Dendritic cell treated with granulocyte-macrophage colony-stimulating factor and Interleukin-4, amounts not matched to agents 40 ng/mL and 50 ng/mL, for 4 days (primary cell): ENCODE measurements at regions of chr2 and their contacts with region 1.

Region 1: DNA sequence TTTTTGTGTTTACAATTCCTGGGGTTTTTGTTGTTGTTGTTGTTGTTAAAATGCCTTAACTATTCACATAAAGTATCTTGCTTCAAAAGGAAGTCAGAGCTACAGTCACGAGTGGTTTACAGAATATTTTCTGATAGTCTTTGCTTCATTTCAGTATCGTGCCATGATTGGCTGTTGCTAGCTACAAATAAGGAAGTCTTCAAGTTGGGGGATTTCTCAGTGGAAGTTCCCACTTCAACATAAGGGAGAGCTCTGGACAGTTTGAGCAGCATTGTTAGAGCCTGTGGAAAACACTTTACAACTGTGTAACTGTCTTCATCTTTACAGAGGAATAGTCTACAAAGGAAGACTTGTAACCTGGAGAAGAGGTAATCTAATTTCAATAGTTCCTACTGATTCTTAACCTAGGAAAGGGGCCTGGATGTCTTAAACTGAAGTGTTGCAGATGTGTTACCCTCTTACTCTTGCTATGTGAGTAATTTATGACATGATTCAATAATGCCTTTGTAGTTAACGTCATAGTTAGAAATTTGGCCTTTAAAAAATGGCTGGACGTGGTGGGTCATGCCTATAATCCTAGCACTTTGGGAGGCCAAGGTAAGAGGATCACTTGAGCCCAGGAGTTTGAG is 23.4 kb upstream of the TANK start:
- H3K4me3 Mint-ChIP-seq: peak overlapping the region; percentile 77
- H3K27ac Mint-ChIP-seq: peak overlapping the region; percentile 91
- H3K4me1 Mint-ChIP-seq: peaks cover 22% of the 10 kb centered on the region
- H3K27me3 Mint-ChIP-seq: no peaks in the 10 kb centered on the region

Region 2: GRCh38 chr2:160984426-160985077 is 152.3 kb before region 1 on chr2:
- intact Hi-C with region 1: no loop called
- H3K4me3 Mint-ChIP-seq: no peak overlapping the region
- H3K27ac Mint-ChIP-seq: no peak overlapping the region
- H3K4me1 Mint-ChIP-seq: peaks cover 5% of the 10 kb centered on the region
- H3K27me3 Mint-ChIP-seq: no peaks in the 10 kb centered on the region

Region 3: DNA sequence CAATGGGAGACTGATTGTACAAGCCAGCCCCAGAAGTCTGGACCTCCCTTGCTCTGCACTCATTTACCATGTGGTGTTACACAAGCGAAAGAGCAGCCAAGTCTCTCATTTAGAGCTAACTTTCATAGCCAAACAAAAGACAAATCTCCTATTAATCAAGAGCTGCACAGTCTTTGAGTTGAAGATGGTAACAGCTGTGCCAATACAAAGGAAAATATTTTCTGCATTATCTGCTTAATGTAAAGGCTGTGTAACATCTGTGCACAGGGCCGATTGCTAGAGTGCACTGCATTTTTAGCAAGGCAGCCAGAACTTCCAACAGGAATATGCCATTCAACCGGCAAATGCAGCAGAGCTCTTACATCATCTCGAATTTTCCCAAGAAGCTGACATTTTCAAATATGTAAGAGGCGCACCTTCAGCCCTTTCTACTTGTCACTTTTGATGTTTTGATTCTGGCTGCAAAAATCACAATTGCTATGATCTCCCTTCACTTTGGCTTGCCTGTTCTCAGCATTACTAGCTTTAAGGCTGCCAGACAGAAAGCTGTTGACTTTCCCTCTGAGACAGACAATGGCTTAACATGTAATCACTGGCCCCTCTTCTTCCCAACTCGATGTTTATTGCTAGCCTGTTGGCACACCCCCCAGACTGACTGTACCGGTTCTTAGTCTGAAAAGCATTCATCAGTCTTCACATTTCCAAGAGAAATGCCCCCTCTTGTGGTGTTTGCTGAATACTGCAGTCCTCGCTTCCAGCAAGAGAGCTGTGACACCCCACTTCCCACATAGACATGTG is 73.5 kb before region 1 on chr2:
- intact Hi-C with region 1: loop called (anchors 5 kb)
- H3K4me3 Mint-ChIP-seq: no peak overlapping the region
- H3K27ac Mint-ChIP-seq: peak overlapping the region; percentile 10
- H3K4me1 Mint-ChIP-seq: peaks cover 6% of the 10 kb centered on the region
- H3K27me3 Mint-ChIP-seq: peaks cover 2% of the 10 kb centered on the region

Region 4: GRCh38 chr2:161077367-161078210 is 59.2 kb before region 1 on chr2:
- intact Hi-C with region 1: loop called (anchors 1 kb)
- H3K4me3 Mint-ChIP-seq: peak overlapping the region; percentile 0
- H3K27ac Mint-ChIP-seq: peak overlapping the region; percentile 91
- H3K4me1 Mint-ChIP-seq: peaks cover 29% of the 10 kb centered on the region
- H3K27me3 Mint-ChIP-seq: no peaks in the 10 kb centered on the region

Region 5: DNA sequence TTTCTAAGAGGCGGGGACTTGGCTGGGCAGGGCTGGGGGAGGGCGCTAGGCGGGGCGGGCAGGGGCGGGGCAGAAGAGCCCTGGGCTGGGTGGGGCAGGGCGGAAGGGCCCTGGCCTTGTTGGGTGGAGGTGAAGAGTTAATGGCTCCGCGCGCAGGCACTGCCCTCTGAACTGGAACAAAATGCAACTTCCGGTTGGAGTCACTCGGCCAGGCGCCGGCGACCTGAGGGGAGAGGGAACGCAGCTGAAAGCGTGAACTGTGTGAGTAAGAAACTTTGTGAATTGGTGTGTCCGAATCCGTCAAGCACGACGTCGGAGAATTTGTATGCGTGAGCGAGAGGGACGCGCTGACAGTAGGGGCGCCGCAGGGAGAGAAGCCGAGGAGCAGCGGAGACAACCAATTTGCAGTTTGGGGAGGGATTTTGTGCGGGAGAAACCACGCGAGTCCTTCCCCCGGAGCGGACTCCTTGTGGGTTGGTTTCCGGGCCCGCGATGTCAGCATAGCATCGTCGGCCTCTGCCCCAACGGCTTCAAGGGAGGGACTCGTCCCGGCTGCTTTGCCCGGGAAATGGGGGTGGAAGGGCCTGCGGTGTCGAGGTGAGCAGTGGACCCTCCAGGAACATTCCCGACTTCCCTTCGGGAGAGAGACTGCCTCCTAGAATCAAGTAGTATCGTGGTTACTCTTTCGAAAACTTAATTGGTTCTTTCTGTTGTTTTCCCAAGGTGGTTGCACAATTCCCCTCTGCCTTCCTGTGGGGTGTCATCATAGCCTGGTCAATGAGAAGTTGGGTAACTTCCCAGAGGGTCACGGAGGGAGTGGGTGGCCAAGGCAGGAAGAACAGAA is 23.6 kb after region 1 on chr2 and contains the start of gene TANK:
- intact Hi-C with region 1: loop called (anchors 1 kb)
- H3K4me3 Mint-ChIP-seq: peak within 1 kb of the TSS; percentile 95
- H3K27ac Mint-ChIP-seq: peak within 1 kb of the TSS; percentile 98
- H3K4me1 Mint-ChIP-seq: peaks cover 32% of the 10 kb centered on the region
- H3K27me3 Mint-ChIP-seq: no peaks in the 10 kb centered on the region

Region 6: GRCh38 chr2:161172901-161173540 is 36.2 kb after region 1 on chr2:
- intact Hi-C with region 1: loop called (anchors 5 kb)
- H3K4me3 Mint-ChIP-seq: no peak overlapping the region
- H3K27ac Mint-ChIP-seq: peak overlapping the region; percentile 67
- H3K4me1 Mint-ChIP-seq: peaks cover 79% of the 10 kb centered on the region
- H3K27me3 Mint-ChIP-seq: no peaks in the 10 kb centered on the region